HCT116 (cell line): ENCODE measurements at regions of chr4 and their contacts with region 1.

Region 1: DNA sequence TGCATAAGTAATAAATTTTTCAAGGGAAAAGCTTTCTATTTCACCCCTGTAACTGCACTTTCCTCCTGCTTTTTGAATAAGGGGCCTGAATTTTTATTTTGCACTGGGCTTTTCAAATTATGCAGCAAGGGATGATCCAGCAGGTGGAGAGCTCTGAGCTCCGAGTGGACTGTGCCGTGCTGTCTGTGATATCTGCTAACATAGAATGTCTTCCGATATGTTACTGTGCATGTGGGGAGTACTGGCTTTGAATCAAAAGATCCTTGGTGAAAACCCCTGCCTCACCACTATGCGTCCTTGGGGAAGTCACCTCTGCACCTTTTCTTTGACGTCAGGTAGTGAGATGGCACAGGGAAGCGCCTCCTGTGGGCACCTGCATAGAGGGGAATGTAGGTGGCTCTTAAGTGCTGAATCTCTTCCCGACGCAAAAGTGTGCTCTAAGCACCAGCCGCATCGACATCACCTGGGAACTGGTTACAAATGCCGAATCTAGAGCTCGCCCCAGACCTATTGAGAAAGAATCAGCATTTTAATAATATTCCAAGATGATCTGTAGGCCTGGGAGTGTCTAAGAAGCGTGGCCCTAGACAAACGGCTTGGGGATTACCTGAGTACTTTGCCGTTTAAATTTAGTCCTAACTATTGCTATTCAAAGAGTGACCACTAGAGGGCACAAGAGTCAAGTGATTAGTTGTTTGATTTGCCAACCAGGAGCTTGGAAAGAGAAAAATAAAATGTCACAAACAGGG is 19.2 kb upstream of the WFS1 start:
- DNase-seq: peak; percentile 76
- ATAC-seq: peak; percentile 93
- H3K4me3 ChIP-seq: peak overlapping the region; percentile 30 to 44
- H3K27ac ChIP-seq: no peak overlapping the region
- H3K4me1 ChIP-seq: peaks cover 3 to 6% of the 10 kb centered on the region in 2 experiments; a peak in 3 of 4 replicates
- H3K27me3 ChIP-seq: no peaks in the 10 kb centered on the region
- CTCF ChIP-seq: peak; percentile 55 to 92 (median 85); a peak in 5 of 6 replicates
- POLR2A ChIP-seq: no peak
- RAD21 ChIP-seq: peak; percentile 83

Region 2: DNA sequence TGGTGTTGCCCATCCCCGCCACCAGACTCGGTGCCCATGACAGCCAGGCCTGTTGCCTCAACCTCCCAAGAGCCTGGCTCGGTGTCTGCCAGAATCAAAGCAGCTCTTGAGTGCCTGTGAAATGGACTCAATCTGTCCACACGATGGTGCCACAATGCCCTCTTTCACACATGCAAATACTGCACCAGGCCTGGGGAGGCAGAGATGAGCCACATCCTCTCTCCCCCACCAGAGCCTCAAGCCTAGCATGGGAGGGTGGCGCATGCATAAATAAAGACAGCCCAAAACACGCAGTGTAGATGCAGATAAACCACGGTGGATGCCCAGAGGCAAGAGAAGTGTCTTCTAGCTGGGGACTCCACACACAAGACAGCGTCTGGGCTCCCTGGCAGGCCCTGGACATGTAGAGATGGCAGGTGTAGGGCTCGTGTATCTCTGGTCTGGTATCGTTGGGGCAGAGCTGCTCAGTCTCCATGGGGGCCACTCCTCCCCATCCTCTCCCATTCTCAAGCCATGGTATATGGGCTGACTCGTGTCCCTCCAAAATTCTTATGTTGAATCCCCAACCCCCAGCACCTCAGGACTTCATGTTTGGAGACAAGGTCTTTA is 115.7 kb before region 1 on chr4:
- CTCF ChIA-PET with region 1: interaction called, 3 read pairs
- POLR2A ChIA-PET with region 1: no interaction called
- RAD21 ChIA-PET with region 1: interaction called in 1 of 2 experiments, 4 read pairs
- intact Hi-C with region 1: loop called (anchors 1 kb)
- DNase-seq: peak; percentile 51
- ATAC-seq: peak; percentile 99
- H3K4me3 ChIP-seq: no peak overlapping the region
- H3K27ac ChIP-seq: no peak overlapping the region
- H3K4me1 ChIP-seq: no peaks in the 10 kb centered on the region
- H3K27me3 ChIP-seq: 0 out of 2 replicates have a peak, but pooled peaks cover 3% of the 10 kb centered on the region
- CTCF ChIP-seq: peak; percentile 63 to 93 (median 69)
- POLR2A ChIP-seq: no peak
- RAD21 ChIP-seq: peak; percentile 57

Region 3: GRCh38 chr4:6264225-6264540 is 13.8 kb after region 1 on chr4:
- CTCF ChIA-PET with region 1: interaction called, 22 read pairs
- POLR2A ChIA-PET with region 1: no interaction called
- RAD21 ChIA-PET with region 1: interaction called, 7 read pairs
- intact Hi-C with region 1: no loop called
- DNase-seq: no peak
- ATAC-seq: peak; percentile 93
- H3K4me3 ChIP-seq: no peak overlapping the region
- H3K27ac ChIP-seq: no peak overlapping the region
- H3K4me1 ChIP-seq: peaks cover 4 to 5% of the 10 kb centered on the region in 2 experiments; a peak in 3 of 4 replicates
- H3K27me3 ChIP-seq: peaks cover 7% of the 10 kb centered on the region; the same call in 1 of the 2 replicates
- CTCF ChIP-seq: peak; percentile 67 to 90 (median 78)
- POLR2A ChIP-seq: no peak
- RAD21 ChIP-seq: peak; percentile 94

Region 4: DNA sequence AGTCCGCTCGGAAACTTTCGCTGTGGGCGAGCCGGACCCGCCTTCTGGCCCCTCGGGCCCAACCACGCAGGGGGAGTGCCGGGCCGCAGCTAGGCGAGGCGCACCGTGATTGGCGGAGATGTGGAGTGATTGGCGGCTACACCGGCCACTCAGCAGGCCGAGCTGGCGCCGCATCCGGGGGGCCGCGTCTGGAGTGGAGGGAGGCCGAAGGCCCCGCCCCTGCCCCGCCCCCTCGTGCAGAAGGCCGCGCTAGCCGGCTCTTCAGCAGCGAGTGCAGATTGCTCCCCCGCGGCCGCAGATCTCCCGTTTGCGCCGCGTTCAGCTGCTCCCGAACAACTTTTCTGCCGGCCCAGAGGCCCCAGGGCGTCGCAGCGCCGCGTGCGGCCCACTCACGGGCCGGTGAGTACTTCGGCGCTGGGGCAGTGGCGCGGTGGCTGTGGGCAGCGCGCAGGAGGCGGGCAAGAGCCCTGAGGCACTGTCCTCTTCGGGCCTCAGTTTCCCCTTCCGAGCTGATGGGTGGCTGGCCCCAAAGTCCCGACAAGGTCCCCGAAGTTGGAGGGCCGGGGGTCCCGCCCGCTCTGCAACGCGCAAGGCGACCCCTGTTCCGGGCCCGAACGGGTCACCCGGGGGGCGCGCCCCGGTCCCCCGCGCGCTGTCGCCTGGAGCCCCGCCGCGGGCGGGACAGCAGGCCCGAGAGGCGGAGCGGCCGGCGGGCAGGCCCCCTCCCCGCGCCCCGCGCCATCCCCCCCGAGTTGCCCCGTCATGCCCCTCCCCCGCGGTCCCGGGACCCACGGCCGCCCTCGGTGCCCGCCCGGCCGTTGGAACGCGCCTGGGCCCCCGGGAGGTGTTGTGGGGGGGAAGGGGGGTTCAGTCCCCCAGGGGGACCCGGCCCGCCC is 19.5 kb after region 1 on chr4 and contains the start of gene WFS1:
- CTCF ChIA-PET with region 1: interaction called, 15 read pairs
- POLR2A ChIA-PET with region 1: no interaction called
- RAD21 ChIA-PET with region 1: no interaction called
- intact Hi-C with region 1: no loop called
- DNase-seq: peak; percentile 94
- ATAC-seq: peak; percentile 98
- H3K4me3 ChIP-seq: peak within 1 kb of the TSS; percentile 72 to 87
- H3K27ac ChIP-seq: peak within 1 kb of the TSS; percentile 47; the same call in 1 of the 2 replicates
- H3K4me1 ChIP-seq: peaks cover 39 to 43% of the 10 kb centered on the region in 2 experiments
- H3K27me3 ChIP-seq: no peaks in the 10 kb centered on the region
- CTCF ChIP-seq: no peak
- POLR2A ChIP-seq: peak; percentile 40
- RAD21 ChIP-seq: no peak
- total RNA-seq, gene WFS1: 21.5 TPM

Region 5: DNA sequence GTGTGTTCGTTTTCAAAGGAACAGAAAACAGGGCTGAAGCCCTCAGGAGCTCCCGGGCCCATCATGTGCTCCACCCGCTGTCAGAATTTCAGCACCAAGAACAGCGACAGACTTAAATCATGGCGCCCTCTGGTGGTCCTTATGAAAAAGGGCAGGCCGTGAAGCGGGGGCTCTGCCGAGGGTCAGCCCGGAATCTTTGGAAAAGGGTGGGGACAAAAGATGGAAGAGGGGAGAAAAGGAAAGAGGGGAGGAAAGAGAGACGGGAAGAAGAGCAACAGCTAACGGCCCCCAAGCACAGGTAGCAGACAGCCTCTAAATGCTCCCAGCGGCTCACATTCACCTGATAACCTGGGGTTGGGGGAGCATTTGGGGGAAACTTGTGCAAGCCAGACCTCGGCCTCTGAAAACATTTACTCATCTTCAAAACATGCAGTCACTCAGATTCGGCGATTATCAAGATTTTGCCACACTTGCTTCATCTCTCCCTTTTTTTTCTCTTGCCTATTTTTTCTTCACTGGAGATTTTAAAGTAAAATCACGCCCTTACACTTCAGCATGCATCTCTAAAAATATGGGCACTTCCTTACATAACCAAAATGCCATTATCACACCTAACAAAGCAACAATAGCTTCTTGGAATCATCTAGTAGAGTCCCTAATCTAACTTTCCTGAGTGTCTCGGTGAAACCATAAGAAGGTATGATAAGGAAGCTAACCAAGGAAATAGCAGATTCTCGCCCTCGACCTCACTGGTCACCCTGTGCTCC is 296.5 kb after region 1 on chr4:
- CTCF ChIA-PET with region 1: interaction called, 10 read pairs
- POLR2A ChIA-PET with region 1: no interaction called
- RAD21 ChIA-PET with region 1: interaction called in 1 of 2 experiments, 6 read pairs
- intact Hi-C with region 1: loop called (anchors 1 kb)
- DNase-seq: peak; percentile 57
- ATAC-seq: peak; percentile 82
- H3K4me3 ChIP-seq: no peak overlapping the region
- H3K27ac ChIP-seq: no peak overlapping the region
- H3K4me1 ChIP-seq: peaks cover 0 to 3% of the 10 kb centered on the region in 2 experiments; a peak in 1 of 4 replicates
- H3K27me3 ChIP-seq: peaks cover 28% of the 10 kb centered on the region
- CTCF ChIP-seq: peak; percentile 87 to 97 (median 94)
- POLR2A ChIP-seq: no peak
- RAD21 ChIP-seq: peak; percentile 80

Region 6: DNA sequence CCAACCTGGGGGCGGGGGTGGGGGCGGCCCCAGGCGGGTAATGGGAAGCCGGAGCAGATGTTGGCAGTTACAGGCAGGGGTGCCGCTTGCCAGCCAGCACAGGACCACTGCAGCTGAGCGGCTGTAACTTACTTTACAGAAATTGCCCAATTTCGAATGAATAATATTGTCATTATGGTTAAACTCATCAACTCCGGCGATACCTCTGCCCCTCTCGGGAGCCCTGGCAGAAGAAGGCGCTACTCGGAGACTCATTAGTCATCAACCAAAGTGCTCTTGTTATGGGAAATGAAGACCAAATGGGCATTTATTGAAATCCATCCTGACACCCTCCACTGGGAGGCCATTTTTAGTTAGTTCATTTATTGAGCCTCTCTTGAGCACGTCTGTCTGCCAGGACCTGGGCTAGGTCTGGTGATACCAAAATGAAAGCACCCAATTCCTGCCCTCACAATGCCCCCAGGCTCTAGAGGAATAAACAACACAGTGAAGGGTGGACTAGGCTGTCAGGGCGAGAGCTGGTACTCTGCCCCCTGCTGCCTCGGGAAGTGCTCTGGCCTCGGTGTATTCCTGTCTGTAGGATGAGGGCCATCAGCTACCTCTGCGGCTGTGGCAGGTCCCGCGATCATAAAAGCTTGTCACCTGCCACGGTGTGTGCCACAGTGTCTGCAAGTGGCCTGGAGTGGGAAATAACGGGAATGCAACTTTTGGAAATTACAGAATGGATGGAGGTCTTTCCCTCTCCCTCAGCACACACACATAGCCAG is 1343.4 kb after region 1 on chr4:
- CTCF ChIA-PET with region 1: no interaction called
- POLR2A ChIA-PET with region 1: no interaction called
- RAD21 ChIA-PET with region 1: no interaction called
- intact Hi-C with region 1: no loop called
- DNase-seq: no peak
- ATAC-seq: peak; percentile 92
- H3K4me3 ChIP-seq: no peak overlapping the region
- H3K27ac ChIP-seq: no peak overlapping the region
- H3K4me1 ChIP-seq: peaks cover 0 to 4% of the 10 kb centered on the region in 2 experiments; a peak in 1 of 4 replicates
- H3K27me3 ChIP-seq: peaks cover 35% of the 10 kb centered on the region
- CTCF ChIP-seq: peak in 2 of 3 experiments; percentile 32 to 44; a peak in 3 of 6 replicates
- POLR2A ChIP-seq: no peak
- RAD21 ChIP-seq: peak; percentile 22; the same call in 1 of the 2 replicates